ENCODE measurements at regions of chr2 and their contacts with region 1.

Region 1: GRCh38 chr2:54723131-54723995 is at the start of gene EML6:
- DNase-seq: peak; percentile 99
- ATAC-seq: peak; percentile 99
- H3K4me3 Mint-ChIP-seq: peak within 1 kb of the TSS; percentile 80
- H3K27ac Mint-ChIP-seq: peak within 1 kb of the TSS; percentile 65
- H3K4me1 Mint-ChIP-seq: peaks cover 12% of the 10 kb centered on the region
- H3K27me3 Mint-ChIP-seq: peaks cover 44% of the 10 kb centered on the region
- total RNA-seq, gene EML6: 0.16 to 0.30 TPM

Region 2: DNA sequence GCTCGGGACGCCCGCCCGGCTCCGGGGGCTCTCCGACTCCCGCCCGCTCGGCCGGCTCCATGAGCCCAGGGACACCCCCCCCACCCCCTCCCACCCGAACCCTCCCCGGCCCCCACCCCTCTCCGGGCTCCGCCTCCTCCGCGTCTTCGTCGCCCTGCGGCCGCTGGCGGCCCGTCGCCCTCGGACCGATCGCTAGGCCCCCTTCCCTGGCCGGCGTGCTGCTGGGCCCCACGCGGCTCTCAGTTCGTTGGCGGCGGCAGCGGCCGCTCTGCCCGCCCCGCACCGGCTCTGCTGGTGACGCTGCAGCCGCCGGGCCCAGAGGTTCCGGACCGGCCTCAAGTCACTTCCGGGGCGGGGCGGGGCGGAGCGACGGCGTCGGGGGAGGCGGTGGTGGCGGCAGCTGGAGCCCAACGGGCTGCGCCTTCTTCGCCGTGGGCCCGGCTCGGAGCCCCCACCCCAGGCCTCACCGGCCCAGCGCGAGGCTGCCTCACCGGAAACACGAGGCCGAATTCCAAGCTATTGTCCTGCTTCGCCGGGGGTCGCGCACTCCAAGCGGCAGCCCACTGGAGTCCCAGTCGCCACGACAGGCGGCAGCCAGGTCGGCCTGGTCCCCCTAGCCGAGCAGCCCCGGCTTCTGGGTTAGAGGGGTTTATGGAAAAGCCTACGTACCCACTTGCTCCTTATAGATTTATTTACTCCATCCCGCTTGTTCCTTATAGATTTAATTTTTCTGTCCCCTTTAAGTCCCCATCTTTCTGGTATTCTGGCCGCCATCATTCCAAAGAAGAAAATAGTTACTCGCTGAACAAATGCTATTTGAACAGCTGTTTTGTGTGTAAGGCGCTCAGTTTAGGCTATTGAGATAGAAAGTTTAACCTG is 752.4 kb before region 1 on chr2 and contains the start of gene PSME4:
- CTCF ChIA-PET with region 1: no interaction called
- POLR2A ChIA-PET with region 1: no interaction called
- intact Hi-C with region 1: loop called in 1 of 2 experiments (anchors 2 kb)
- DNase-seq: peak; percentile 96
- ATAC-seq: peak; percentile 86
- H3K4me3 Mint-ChIP-seq: peak within 1 kb of the TSS; percentile 84
- H3K27ac Mint-ChIP-seq: peak within 1 kb of the TSS; percentile 97
- H3K4me1 Mint-ChIP-seq: peaks cover 35% of the 10 kb centered on the region
- H3K27me3 Mint-ChIP-seq: no peaks in the 10 kb centered on the region
- total RNA-seq, gene PSME4: 37.8 to 44.3 TPM

Region 3: GRCh38 chr2:54455563-54456361 is 267.6 kb before region 1 on chr2 and contains the start of gene SPTBN1:
- CTCF ChIA-PET with region 1: no interaction called
- POLR2A ChIA-PET with region 1: no interaction called
- intact Hi-C with region 1: loop called in 1 of 2 experiments (anchors 5 kb)
- DNase-seq: peak; percentile 55
- ATAC-seq: peak; percentile 53
- H3K4me3 Mint-ChIP-seq: peak within 1 kb of the TSS; percentile 72
- H3K27ac Mint-ChIP-seq: no peak within 1 kb of the TSS
- H3K4me1 Mint-ChIP-seq: peaks cover 12% of the 10 kb centered on the region
- H3K27me3 Mint-ChIP-seq: peaks cover 45% of the 10 kb centered on the region
- total RNA-seq, gene SPTBN1: 76.6 to 86.8 TPM

Region 4: DNA sequence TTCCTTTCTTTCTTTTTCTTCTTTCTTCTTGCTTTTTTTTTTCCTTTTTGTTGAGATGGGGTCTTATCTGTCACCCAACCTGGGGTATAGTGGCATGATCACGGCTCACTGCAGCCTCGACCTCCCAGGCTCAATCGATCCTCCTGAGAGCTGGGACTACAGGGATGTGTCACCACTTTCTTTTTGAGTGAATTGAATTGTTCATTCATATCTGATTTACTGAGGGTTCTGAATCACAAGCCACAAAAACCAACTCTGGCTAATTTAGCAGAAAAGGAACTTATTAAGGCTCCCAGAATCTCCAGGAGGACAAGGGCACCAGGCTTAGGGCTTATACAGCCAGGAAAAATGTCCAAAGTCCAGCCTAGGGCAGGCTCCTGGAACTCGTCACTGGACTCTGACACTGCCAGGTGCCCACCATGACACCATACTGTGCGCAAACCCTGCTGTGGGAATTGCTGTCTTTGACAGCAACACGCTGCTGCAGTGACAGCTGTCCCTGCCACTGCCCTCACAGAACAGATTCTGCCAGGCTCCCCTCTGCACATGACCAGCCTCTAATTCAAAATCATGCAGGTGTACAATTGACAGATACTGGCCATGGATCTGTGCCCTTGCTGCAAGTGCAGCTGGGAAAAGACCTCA is 42.8 kb before region 1 on chr2:
- CTCF ChIA-PET with region 1: no interaction called
- POLR2A ChIA-PET with region 1: no interaction called
- intact Hi-C with region 1: loop called (anchors 1 kb)
- DNase-seq: peak; percentile 69
- ATAC-seq: peak; percentile 95
- H3K4me3 Mint-ChIP-seq: no peak overlapping the region
- H3K27ac Mint-ChIP-seq: peak overlapping the region; percentile 72
- H3K4me1 Mint-ChIP-seq: peaks cover 22% of the 10 kb centered on the region
- H3K27me3 Mint-ChIP-seq: peaks cover 61% of the 10 kb centered on the region

Region 5: DNA sequence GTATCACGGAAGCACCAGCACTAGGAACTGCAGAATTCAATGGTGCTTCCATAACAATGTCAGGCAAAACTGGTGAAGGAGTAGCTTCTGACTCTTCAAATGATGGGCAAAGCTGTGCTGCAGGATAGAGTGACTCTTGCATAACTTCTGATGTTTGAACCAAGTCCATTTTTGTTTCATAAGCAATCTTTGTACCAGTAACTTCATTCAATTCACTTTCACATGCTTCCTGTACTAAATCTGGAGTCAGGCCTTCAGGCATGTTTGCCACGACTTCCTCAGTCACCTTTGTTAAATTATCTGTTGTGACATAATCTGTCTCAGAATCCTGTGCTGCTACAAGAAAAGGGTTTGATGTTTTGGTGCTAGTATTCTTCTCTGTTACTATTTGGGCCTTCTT is 302.8 kb after region 1 on chr2:
- CTCF ChIA-PET with region 1: no interaction called
- POLR2A ChIA-PET with region 1: no interaction called
- intact Hi-C with region 1: no loop called
- DNase-seq: no peak
- ATAC-seq: peak; percentile 19
- H3K4me3 Mint-ChIP-seq: no peak overlapping the region
- H3K27ac Mint-ChIP-seq: peak overlapping the region; percentile 26
- H3K4me1 Mint-ChIP-seq: peaks cover 10% of the 10 kb centered on the region
- H3K27me3 Mint-ChIP-seq: no peaks in the 10 kb centered on the region

Region 6: GRCh38 chr2:55175254-55176025 is 452.1 kb after region 1 on chr2:
- CTCF ChIA-PET with region 1: no interaction called
- POLR2A ChIA-PET with region 1: no interaction called
- intact Hi-C with region 1: loop called (anchors 5 to 10 kb)
- DNase-seq: no peak
- ATAC-seq: peak; percentile 78
- H3K4me3 Mint-ChIP-seq: no peak overlapping the region
- H3K27ac Mint-ChIP-seq: no peak overlapping the region
- H3K4me1 Mint-ChIP-seq: peaks cover 8% of the 10 kb centered on the region
- H3K27me3 Mint-ChIP-seq: no peaks in the 10 kb centered on the region

Region 7: DNA sequence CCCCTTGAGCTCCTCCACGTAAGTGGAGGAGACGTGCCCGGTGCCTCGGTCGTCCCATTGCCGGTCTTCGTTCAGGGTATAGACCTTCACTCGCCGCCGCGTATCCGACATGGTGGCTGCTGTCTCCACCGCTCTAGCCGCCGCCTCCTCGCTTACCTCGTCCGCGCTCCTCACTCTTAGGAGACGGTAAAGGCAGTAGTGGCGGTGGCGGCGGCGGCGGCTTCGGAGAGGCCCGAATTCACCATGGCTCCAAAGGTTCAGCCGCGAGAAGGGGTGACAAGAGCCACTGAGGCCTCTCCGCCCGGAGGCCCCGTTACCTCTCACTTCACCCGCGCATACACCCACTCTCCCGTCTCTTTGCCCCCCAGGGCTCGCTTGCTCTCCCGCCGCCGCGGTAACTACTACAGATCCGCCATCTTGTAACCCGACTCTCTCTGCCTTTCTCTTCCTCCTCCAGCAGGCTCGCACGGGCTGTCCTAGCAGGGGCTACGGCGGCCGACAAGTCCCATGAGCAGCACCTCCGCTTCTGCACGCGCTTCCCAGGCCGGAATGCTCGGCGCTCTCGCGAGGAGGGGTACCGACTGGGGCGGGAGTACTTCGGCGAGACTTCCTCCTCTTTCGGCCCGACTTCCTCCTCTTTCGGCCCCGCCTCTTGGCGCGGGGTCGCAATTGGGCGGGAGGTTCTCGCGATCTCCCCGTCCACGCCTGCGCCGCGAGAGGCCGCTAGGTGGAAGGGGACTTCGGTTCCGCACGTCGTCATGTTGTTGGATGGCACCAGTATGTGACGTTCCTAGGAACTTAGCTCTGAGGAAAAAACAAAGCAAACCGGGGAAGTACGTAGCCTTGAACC is 894.0 kb after region 1 on chr2 and contains the start of gene PPP4R3B:
- CTCF ChIA-PET with region 1: no interaction called
- POLR2A ChIA-PET with region 1: no interaction called
- intact Hi-C with region 1: loop called (anchors 5 to 10 kb)
- DNase-seq: peak; percentile 99
- ATAC-seq: peak; percentile 87
- H3K4me3 Mint-ChIP-seq: no peak within 1 kb of the TSS
- H3K27ac Mint-ChIP-seq: no peak within 1 kb of the TSS
- H3K4me1 Mint-ChIP-seq: peaks cover 27% of the 10 kb centered on the region
- H3K27me3 Mint-ChIP-seq: no peaks in the 10 kb centered on the region
- total RNA-seq, gene PPP4R3B: 67.5 to 74.1 TPM